ENCODE measurements at regions of chr18 and their contacts with region 1.

Region 1: DNA sequence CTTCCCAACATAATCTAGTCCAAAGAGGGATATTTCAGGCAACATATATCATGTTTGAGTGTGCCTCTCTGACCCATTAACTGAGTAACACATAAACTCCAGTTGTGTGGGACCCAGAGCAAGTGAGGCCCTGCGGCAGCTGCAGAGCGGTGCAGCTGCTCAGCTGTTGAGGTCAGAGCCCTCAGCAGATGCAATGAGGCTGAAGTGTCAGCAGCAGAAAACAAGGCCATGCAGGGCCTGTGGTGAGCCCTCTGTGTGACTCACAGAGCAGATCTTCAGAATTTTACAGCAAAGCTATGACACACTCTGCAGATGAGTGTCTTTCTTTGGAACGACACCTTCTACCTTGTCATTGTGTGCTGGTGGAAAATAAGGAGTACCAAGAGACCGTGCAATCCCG is 168.5 kb downstream of the CBLN2 start:
- DNase-seq: no peak
- ATAC-seq: no peak
- H3K4me3 ChIP-seq: no peak overlapping the region
- H3K4me3 Mint-ChIP-seq: no peak overlapping the region
- H3K27ac ChIP-seq: no peak overlapping the region
- H3K27ac Mint-ChIP-seq: no peak overlapping the region
- H3K4me1 ChIP-seq: no peaks in the 10 kb centered on the region
- H3K4me1 Mint-ChIP-seq: no peaks in the 10 kb centered on the region
- H3K27me3 ChIP-seq: no peaks in the 10 kb centered on the region
- H3K27me3 Mint-ChIP-seq: no peaks in the 10 kb centered on the region
- CTCF ChIP-seq: no peak

Region 2: DNA sequence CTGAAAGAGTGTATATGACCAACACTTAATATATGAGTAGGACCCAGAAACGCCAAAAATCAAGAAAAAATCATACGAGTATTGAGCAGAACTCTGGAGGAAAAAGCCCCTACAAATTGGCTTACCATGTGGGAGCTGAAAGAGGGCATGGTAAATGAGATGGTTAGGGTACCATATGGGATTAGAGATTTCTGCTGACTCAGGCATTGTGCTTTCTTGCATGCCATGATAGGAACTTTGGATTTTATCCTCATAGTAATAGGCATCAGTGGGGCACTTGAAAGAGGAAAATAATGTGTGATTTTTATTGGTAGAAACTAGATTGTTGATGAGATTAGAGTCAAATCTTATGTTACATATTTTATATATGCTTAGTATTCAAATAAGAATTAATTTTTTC is 102.6 kb before region 1 on chr18:
- CTCF ChIA-PET with region 1: no interaction called
- POLR2A ChIA-PET with region 1: no interaction called
- intact Hi-C with region 1: no loop called
- DNase-seq: no peak
- ATAC-seq: no peak
- H3K4me3 ChIP-seq: no peak overlapping the region
- H3K4me3 Mint-ChIP-seq: no peak overlapping the region
- H3K27ac ChIP-seq: no peak overlapping the region
- H3K27ac Mint-ChIP-seq: no peak overlapping the region
- H3K4me1 ChIP-seq: no peaks in the 10 kb centered on the region
- H3K4me1 Mint-ChIP-seq: no peaks in the 10 kb centered on the region
- H3K27me3 ChIP-seq: no peaks in the 10 kb centered on the region
- H3K27me3 Mint-ChIP-seq: no peaks in the 10 kb centered on the region
- CTCF ChIP-seq: no peak

Region 3: DNA sequence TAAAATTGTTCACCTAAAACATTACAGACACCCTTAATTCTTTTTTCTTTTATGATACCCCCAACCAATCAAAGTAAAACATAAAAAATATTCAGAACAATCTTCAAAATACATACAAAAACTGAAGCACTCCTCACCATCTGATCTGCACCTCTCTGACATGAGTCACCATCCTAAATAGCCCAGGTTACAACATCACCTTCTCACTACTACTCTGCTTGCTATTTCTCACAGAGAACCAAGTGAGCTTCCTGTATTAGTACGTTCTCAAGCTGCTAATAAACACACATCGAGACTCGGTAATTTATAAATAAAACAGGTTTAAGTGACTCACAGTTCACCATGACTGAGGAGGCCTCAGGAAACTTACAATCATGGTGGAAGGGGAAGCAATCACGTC is 15.0 kb before region 1 on chr18:
- CTCF ChIA-PET with region 1: no interaction called
- POLR2A ChIA-PET with region 1: no interaction called
- intact Hi-C with region 1: no loop called
- DNase-seq: no peak
- ATAC-seq: no peak
- H3K4me3 ChIP-seq: no peak overlapping the region
- H3K4me3 Mint-ChIP-seq: no peak overlapping the region
- H3K27ac ChIP-seq: no peak overlapping the region
- H3K27ac Mint-ChIP-seq: no peak overlapping the region
- H3K4me1 ChIP-seq: no peaks in the 10 kb centered on the region
- H3K4me1 Mint-ChIP-seq: no peaks in the 10 kb centered on the region
- H3K27me3 ChIP-seq: no peaks in the 10 kb centered on the region
- H3K27me3 Mint-ChIP-seq: no peaks in the 10 kb centered on the region
- CTCF ChIP-seq: no peak

Region 4: GRCh38 chr18:72436401-72436800 is 60.8 kb after region 1 on chr18:
- CTCF ChIA-PET with region 1: no interaction called
- POLR2A ChIA-PET with region 1: no interaction called
- intact Hi-C with region 1: loop called in 1 of 2 experiments (anchors 10 kb)
- DNase-seq: no peak
- ATAC-seq: no peak
- H3K4me3 ChIP-seq: no peak overlapping the region
- H3K4me3 Mint-ChIP-seq: no peak overlapping the region
- H3K27ac ChIP-seq: no peak overlapping the region
- H3K27ac Mint-ChIP-seq: no peak overlapping the region
- H3K4me1 ChIP-seq: no peaks in the 10 kb centered on the region
- H3K4me1 Mint-ChIP-seq: no peaks in the 10 kb centered on the region
- H3K27me3 ChIP-seq: no peaks in the 10 kb centered on the region
- H3K27me3 Mint-ChIP-seq: no peaks in the 10 kb centered on the region
- CTCF ChIP-seq: no peak

Measured in CD4-positive, alpha-beta T cell (primary cell).